Right ventricle myocardium superior (tissue), 1 donor: ENCODE measurements at regions of chr13 and their contacts with region 1.

Region 1: DNA sequence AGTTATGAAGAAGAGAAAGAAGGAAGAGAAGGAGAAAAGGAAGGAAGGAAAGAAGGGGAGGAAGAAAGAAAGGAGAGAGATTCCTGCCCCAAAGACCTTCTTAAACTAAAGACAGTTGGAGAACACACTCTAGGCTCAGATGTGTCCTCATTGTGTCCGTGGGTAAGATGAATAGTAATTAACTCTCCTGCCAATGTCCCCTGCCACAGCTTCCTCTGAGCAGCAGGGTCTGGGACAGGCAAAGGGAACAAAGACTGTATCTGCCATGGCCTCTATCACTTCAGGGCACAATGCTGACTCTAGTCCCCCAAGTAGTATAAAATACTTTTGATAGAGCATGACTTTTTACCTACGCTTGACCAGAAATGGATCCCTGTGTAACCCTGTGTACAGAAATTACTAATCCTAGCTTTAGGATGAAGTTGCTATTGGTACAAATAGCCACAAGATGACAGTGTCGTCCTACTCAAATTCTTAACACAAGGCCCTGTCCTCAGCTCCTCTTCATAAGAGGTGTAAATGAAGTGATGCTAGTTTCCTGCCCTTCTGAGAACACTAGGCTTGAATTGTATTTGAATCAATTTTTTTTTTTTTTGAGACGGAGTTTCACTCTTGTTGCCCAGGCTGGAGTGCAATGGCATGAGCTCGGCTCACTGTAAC is 186.2 kb upstream of the GPR12 start:
- DNase-seq: no peak
- ATAC-seq: peak; percentile 80

Region 2: GRCh38 chr13:26719356-26719945 is 227.4 kb before region 1 on chr13:
- intact Hi-C with region 1: no loop called
- DNase-seq: no peak
- ATAC-seq: no peak

Region 3: GRCh38 chr13:27362064-27362883 is 415.5 kb after region 1 on chr13:
- intact Hi-C with region 1: loop called (anchors 5 kb)
- DNase-seq: peak; percentile 92
- ATAC-seq: peak; percentile 96

Region 4: DNA sequence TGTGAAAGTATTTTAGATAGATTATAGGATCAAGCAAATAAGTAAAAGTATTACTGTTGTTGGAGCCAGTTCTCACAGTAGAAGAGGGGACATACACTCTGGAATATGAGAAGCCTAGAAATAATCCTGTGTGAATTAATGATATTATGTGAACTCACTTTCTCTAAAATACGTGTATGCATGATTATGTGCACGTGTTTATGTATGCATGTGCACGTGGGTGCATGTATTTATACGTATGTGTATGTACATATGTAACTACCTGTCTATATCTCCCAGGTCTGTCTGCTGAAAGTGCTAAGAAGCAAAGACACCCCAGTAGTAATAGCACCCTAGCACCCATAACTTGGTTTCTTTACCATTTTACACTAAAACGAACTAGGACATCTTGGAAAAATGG is 931.5 kb after region 1 on chr13:
- intact Hi-C with region 1: no loop called
- DNase-seq: no peak
- ATAC-seq: no peak